Transverse colon (tissue), 4 donors: ENCODE measurements at regions of chr4 and their contacts with region 1.

Region 1: DNA sequence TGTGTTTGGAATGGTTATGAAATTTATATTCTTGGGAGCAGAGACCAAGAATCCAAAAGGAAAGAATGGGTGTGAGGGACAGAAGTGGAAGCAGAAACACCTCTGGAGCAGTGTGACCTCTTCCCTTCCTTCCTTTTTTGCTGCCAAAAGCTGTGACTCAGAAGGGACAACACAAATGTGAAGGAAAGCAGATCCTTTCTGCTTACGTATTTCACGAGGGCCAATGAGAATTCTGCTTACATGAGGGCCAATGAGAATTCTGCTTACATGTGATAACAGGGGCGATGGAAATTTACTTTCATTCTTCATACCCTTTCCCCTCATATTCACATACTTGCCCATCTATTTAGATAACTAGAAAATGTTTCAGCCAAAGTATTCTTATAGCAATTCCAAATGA is 404.6 kb downstream of the PRDM5 start:
- DNase-seq: peak; percentile 29
- H3K4me3 ChIP-seq: no peak overlapping the region
- H3K27ac ChIP-seq: peak overlapping the region; percentile 19 to 70 (median 62)
- H3K4me1 ChIP-seq: peaks cover 0 to 12% (median 2%) of the 10 kb centered on the region in 4 donors
- H3K27me3 ChIP-seq: no peaks in the 10 kb centered on the region
- CTCF ChIP-seq: no peak
- EP300 ChIP-seq: no peak
- POLR2A ChIP-seq: no peak

Region 2: GRCh38 chr4:120506536-120506935 is 11.4 kb before region 1 on chr4:
- in situ Hi-C with region 1: no loop called
- intact Hi-C with region 1: loop called (anchors 2 kb)
- DNase-seq: no peak
- H3K4me3 ChIP-seq: no peak overlapping the region
- H3K27ac ChIP-seq: no peak overlapping the region
- H3K4me1 ChIP-seq: no peaks in the 10 kb centered on the region
- H3K27me3 ChIP-seq: no peaks in the 10 kb centered on the region
- CTCF ChIP-seq: no peak
- EP300 ChIP-seq: no peak
- POLR2A ChIP-seq: no peak

Region 3: DNA sequence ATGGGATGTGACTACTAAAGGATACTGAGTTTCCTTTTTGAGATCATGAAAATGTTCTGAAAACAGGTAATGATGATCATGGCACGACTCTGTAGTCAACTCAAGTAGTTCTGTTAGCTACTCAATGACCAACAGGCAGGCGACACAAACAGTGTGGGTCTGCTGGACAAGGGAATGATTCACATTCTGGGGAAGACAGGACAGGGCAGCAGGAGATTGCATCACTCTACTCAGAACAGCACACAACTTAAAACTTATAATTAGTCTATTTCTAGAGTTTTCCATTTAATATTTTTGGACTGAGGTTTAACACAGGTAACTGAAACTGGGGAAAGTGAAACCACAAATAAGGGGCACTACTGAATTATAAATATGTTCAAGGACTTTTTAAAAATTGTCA is 39.4 kb after region 1 on chr4:
- in situ Hi-C with region 1: no loop called
- intact Hi-C with region 1: no loop called
- DNase-seq: no peak
- H3K4me3 ChIP-seq: no peak overlapping the region
- H3K27ac ChIP-seq: no peak overlapping the region
- H3K4me1 ChIP-seq: no peaks in the 10 kb centered on the region
- H3K27me3 ChIP-seq: no peaks in the 10 kb centered on the region
- CTCF ChIP-seq: no peak
- EP300 ChIP-seq: no peak
- POLR2A ChIP-seq: no peak

Region 4: DNA sequence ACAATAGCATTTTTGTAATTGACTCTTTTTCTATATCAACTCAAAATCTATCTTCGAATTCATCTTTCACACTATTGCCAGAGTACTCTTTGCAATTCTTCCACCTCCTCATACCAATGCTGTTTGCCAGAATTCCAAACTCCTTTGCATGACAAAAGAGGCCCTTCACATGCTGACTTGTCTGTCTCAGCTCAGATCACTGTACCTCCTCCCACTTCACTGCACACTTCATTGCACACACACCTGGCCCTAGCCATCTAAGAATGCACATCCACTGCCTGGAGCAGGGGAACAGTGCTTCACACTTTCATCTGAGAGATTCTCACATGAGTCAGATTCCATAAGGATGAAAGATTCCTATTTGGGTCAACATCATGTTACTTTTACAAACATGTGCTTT is 348.0 kb after region 1 on chr4:
- in situ Hi-C with region 1: no loop called
- intact Hi-C with region 1: no loop called
- DNase-seq: no peak
- H3K4me3 ChIP-seq: no peak overlapping the region
- H3K27ac ChIP-seq: no peak overlapping the region
- H3K4me1 ChIP-seq: peaks cover 0 to 15% (median 6%) of the 10 kb centered on the region in 4 donors
- H3K27me3 ChIP-seq: no peaks in the 10 kb centered on the region
- CTCF ChIP-seq: no peak
- EP300 ChIP-seq: no peak
- POLR2A ChIP-seq: no peak